ENCODE measurements at regions of chr3 and their contacts with region 1.

Region 1: DNA sequence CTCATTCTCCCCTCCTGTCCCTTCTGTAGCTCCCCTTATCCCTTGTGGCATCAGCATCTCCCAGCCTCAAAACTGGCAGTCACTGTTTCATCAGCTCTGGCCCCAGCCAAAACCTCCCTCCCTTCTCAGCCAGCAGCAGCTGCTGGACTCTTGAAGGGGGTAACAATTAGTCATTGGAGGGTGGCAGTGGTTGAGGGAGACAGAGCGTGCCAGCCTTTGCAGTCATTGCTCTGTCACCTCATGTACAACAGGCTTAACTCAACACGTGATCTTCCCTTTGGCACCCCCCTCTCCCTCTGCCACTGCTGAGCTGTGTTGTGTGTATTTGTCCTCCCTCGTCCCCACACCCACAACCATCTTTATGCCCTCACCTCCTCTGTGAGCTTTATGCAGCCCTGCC is 28.2 kb downstream of the RBP2 start:
- DNase-seq: peak; percentile 6 to 93 (median 84)
- H3K4me3 ChIP-seq: no peak overlapping the region
- H3K27ac ChIP-seq: peak overlapping the region in 58 of 59 donors; percentile 43 to 95 (median 86)
- H3K27me3 ChIP-seq: no peaks in the 10 kb centered on the region
- CTCF ChIP-seq: peak in 3 of 56 donors; percentile 9 to 18 (median 13)

Region 2: DNA sequence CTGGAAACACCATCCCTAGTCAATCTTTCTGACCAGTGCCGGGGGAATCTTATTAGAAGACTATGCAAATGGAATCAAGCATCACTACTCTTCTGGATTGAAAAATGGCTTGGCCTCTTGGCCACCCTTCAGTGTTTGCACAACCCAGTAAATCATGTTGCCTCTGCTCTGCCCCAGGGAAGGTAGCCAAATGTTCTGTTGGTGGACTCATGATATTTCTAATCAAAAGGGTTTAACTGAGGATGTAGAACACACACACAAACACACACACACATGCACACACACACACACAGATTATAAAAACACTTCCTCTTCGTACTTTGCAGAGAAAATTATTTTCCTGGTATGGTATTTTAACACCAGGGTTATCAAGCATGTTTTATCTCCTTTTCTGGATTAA is 20.3 kb after region 1 on chr3:
- intact Hi-C with region 1: no loop called
- DNase-seq: no peak
- H3K4me3 ChIP-seq: no peak overlapping the region
- H3K27ac ChIP-seq: no peak overlapping the region
- H3K27me3 ChIP-seq: no peaks in the 10 kb centered on the region
- CTCF ChIP-seq: no peak

Region 3: GRCh38 chr3:139533781-139534443 is 85.8 kb after region 1 on chr3:
- intact Hi-C with region 1: loop called (anchors 5 to 10 kb)
- DNase-seq: peak in 3 of 10 donors; percentile 31 to 65 (median 58)
- H3K4me3 ChIP-seq: peak overlapping the region in 9 of 59 donors; percentile 2 to 29 (median 13)
- H3K27ac ChIP-seq: peak overlapping the region; percentile 19 to 95 (median 89)
- H3K27me3 ChIP-seq: no peaks in the 10 kb centered on the region
- CTCF ChIP-seq: peak in 2 of 56 donors; percentile 11 to 22

Region 4: DNA sequence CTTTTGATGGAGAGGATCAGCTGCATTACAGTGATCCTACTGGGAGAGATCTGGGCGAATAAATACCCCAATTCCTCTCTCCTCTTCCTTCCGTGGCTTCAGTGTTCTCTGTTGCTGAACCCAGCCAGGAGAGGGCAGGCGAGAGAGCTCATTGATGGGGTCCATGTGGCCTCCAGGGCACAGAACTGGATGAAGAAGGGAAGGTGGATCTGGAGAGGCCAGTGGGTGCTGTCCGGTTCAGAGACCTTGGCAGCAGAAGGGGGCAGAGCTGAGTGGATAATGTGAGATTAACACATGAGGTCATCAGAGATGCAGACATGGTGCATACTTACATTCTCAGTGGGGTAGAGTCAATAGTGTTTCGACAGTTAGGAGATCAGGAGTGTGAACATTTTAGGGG is 680.5 kb after region 1 on chr3:
- intact Hi-C with region 1: no loop called
- DNase-seq: peak in 3 of 10 donors; percentile 9 to 49 (median 35)
- H3K4me3 ChIP-seq: no peak overlapping the region
- H3K27ac ChIP-seq: no peak overlapping the region
- H3K27me3 ChIP-seq: no peaks in the 10 kb centered on the region
- CTCF ChIP-seq: peak in 50 of 56 donors; percentile 16 to 70 (median 45)

Measured in dorsolateral prefrontal cortex (tissue), 120 donors.